ENCODE measurements at regions of chr2 and their contacts with region 1.

Region 1: GRCh38 chr2:142980561-142981378 is 103.3 kb downstream of the KYNU start:
- DNase-seq: no peak
- ATAC-seq: no peak
- H3K4me3 ChIP-seq: no peak overlapping the region
- H3K27ac ChIP-seq: no peak overlapping the region
- H3K4me1 ChIP-seq: no peaks in the 10 kb centered on the region
- H3K27me3 ChIP-seq: no peaks in the 10 kb centered on the region

Region 2: GRCh38 chr2:142280831-142281230 is 699.9 kb before region 1 on chr2:
- intact Hi-C with region 1: no loop called
- DNase-seq: no peak
- ATAC-seq: no peak
- H3K4me3 ChIP-seq: no peak overlapping the region
- H3K27ac ChIP-seq: no peak overlapping the region
- H3K4me1 ChIP-seq: no peaks in the 10 kb centered on the region
- H3K27me3 ChIP-seq: no peaks in the 10 kb centered on the region

Region 3: GRCh38 chr2:142682528-142682927 is 298.2 kb before region 1 on chr2:
- intact Hi-C with region 1: loop called (anchors 5 kb)
- DNase-seq: no peak
- ATAC-seq: no peak
- H3K4me3 ChIP-seq: no peak overlapping the region
- H3K27ac ChIP-seq: no peak overlapping the region
- H3K4me1 ChIP-seq: no peaks in the 10 kb centered on the region
- H3K27me3 ChIP-seq: no peaks in the 10 kb centered on the region

Region 4: GRCh38 chr2:142791335-142791734 is 189.4 kb before region 1 on chr2:
- intact Hi-C with region 1: loop called in 1 of 2 experiments (anchors 5 kb)
- DNase-seq: no peak
- ATAC-seq: no peak
- H3K4me3 ChIP-seq: no peak overlapping the region
- H3K27ac ChIP-seq: no peak overlapping the region
- H3K4me1 ChIP-seq: no peaks in the 10 kb centered on the region
- H3K27me3 ChIP-seq: no peaks in the 10 kb centered on the region

Region 5: DNA sequence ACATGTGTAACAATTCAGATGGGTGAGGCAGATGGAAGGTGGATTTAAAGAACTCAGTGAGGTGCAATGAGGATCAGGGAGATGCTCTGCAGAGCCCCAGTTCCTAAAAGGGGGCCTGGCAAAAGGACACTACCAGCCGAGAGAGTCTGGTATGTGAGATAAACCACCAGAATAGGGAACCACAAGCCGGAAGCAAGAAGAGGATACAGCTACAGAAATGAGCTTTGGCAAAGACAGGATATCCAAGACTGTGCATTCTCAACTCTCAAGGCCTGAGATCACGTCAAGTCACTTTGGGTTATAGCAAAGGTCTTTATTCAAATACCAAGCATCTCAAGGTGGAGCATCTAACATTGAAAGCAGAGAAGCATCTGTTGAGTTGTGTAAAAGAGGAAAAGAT is 441.9 kb after region 1 on chr2:
- intact Hi-C with region 1: no loop called
- DNase-seq: no peak
- ATAC-seq: no peak
- H3K4me3 ChIP-seq: no peak overlapping the region
- H3K27ac ChIP-seq: no peak overlapping the region
- H3K4me1 ChIP-seq: no peaks in the 10 kb centered on the region
- H3K27me3 ChIP-seq: no peaks in the 10 kb centered on the region